ENCODE measurements at regions of chr9 and their contacts with region 1.

Region 1: DNA sequence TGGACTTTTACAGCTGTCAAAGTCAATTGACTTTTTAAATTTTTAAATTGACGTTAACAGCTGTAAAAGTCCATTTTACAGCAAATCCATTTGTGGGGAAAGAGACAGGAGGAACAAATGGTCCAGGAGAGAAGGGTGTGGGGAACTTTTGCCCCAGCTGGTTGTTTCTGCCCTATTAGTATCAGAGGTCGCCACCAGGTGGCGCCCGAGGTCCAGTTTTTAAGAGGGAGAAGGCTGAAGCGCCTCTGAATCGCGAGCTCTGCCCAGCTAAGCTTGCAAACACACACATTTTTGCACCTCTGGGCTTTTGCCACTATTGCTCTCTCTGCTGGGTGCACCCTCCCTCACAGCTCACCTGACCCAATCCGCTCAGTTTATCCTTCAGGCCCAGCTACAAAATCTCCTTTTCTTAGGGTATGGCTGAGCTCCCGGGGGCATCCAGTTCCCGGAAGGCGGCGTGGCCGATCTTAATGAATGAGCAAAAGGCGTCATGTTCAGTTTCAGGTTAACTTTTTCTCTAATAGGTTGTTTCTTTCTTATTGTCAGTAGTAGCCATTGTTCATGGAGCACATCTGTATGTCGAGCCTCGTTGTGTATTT is 6.3 kb upstream of the TTLL11 start:
- DNase-seq: peak; percentile 81 to 89
- ATAC-seq: peak; percentile 79 to 91 (median 85)
- H3K4me3 ChIP-seq: no peak overlapping the region
- H3K4me3 Mint-ChIP-seq: no peak overlapping the region
- H3K27ac ChIP-seq: no peak overlapping the region
- H3K27ac Mint-ChIP-seq: no peak overlapping the region
- H3K4me1 ChIP-seq: peaks cover 12% of the 10 kb centered on the region
- H3K4me1 Mint-ChIP-seq: peaks cover 11 to 17% of the 10 kb centered on the region in 2 donors
- H3K27me3 ChIP-seq: no peaks in the 10 kb centered on the region
- H3K27me3 Mint-ChIP-seq: peaks cover 8 to 9% of the 10 kb centered on the region in 2 donors
- CTCF ChIP-seq: peak; percentile 86

Region 2: GRCh38 chr9:122307925-122308324 is 208.6 kb after region 1 on chr9:
- intact Hi-C with region 1: no loop called
- DNase-seq: no peak
- ATAC-seq: no peak
- H3K4me3 ChIP-seq: no peak overlapping the region
- H3K4me3 Mint-ChIP-seq: no peak overlapping the region
- H3K27ac ChIP-seq: no peak overlapping the region
- H3K27ac Mint-ChIP-seq: no peak overlapping the region
- H3K4me1 ChIP-seq: no peaks in the 10 kb centered on the region
- H3K4me1 Mint-ChIP-seq: no peaks in the 10 kb centered on the region
- H3K27me3 ChIP-seq: no peaks in the 10 kb centered on the region
- H3K27me3 Mint-ChIP-seq: no peaks in the 10 kb centered on the region
- CTCF ChIP-seq: no peak

Region 3: GRCh38 chr9:122350638-122351355 is 251.4 kb after region 1 on chr9:
- intact Hi-C with region 1: loop called (anchors 1 kb)
- DNase-seq: peak; percentile 78 to 83
- ATAC-seq: peak; percentile 84 to 88 (median 85)
- H3K4me3 ChIP-seq: no peak overlapping the region
- H3K4me3 Mint-ChIP-seq: no peak overlapping the region
- H3K27ac ChIP-seq: no peak overlapping the region
- H3K27ac Mint-ChIP-seq: no peak overlapping the region
- H3K4me1 ChIP-seq: peaks cover 12% of the 10 kb centered on the region
- H3K4me1 Mint-ChIP-seq: peaks cover 0 to 17% of the 10 kb centered on the region in 2 donors
- H3K27me3 ChIP-seq: peaks cover 5% of the 10 kb centered on the region
- H3K27me3 Mint-ChIP-seq: peaks cover 20 to 29% of the 10 kb centered on the region in 2 donors
- CTCF ChIP-seq: peak; percentile 94